Activated CD8-positive, alpha-beta T cell treated with anti-CD3 and anti-CD28 coated beads for 36 hours (primary cell): ENCODE measurements at regions of chr1 and their contacts with region 1.

Region 1: GRCh38 chr1:160607011-160607671 is 27.8 kb upstream of the CD84 start:
- DNase-seq: peak; percentile 76
- ATAC-seq: peak; percentile 95
- H3K4me3 Mint-ChIP-seq: no peak overlapping the region
- H3K27ac Mint-ChIP-seq: peak overlapping the region; percentile 89
- H3K4me1 Mint-ChIP-seq: peaks cover 55% of the 10 kb centered on the region
- H3K27me3 Mint-ChIP-seq: no peaks in the 10 kb centered on the region
- CTCF ChIP-seq: peak; percentile 93

Region 2: DNA sequence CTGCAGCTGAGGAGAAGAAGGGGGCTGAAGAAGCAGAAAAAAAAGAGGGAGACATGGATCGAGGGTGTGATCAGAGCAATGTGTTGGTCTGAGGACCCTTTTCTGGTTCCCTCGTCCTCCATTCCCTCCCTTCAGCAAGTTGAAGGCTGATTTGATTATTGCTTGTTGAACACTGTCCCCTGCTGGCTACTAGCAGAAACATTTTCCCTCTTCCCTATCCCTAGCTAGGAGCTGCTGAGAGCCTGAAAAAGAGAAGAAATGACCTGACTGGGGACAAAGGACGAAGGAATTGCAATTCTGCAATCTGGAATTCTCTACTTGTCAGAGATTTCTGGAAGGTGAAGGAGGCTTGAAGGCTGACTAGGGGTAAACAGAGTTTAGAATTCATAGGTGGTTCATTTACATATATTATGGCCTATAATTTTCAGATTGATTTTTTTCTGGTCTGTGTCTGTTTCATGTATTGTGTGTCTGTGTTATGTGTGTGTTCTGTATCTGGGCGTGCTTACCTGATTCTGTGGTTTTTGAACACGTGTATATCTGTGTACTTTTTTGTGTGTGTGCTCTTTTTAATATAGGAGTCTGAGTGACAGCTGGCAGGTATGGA is 230.5 kb before region 1 on chr1:
- CTCF ChIA-PET with region 1: interaction called, 14 read pairs
- POLR2A ChIA-PET with region 1: interaction called, 3 read pairs
- intact Hi-C with region 1: no loop called
- DNase-seq: peak; percentile 41
- ATAC-seq: peak; percentile 85
- H3K4me3 Mint-ChIP-seq: no peak overlapping the region
- H3K27ac Mint-ChIP-seq: no peak overlapping the region
- H3K4me1 Mint-ChIP-seq: peaks cover 11% of the 10 kb centered on the region
- H3K27me3 Mint-ChIP-seq: no peaks in the 10 kb centered on the region
- CTCF ChIP-seq: peak; percentile 95

Region 3: DNA sequence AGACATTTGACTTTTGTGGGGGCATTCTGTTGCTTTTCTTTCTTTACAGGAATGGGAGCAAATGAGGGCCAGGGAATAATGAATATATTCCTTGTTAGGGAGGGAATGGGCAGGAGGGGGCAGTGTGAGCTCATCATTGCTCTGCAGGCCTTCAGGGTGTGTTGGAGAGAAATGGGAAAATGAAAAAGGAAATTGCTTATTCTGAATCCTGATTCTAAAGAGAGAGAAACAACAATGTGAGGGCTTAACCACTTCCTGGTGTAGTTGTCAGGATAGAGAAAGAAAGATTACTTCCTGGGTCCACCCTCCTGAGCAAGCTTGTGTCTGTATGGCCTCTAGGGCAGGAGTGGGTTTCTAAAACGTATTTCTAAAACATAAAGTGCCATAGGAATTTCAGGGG is 178.5 kb before region 1 on chr1:
- CTCF ChIA-PET with region 1: interaction called, 74 read pairs
- POLR2A ChIA-PET with region 1: interaction called, 23 read pairs
- intact Hi-C with region 1: loop called (anchors 1 kb)
- DNase-seq: peak; percentile 42
- ATAC-seq: peak; percentile 53
- H3K4me3 Mint-ChIP-seq: peak overlapping the region; percentile 54
- H3K27ac Mint-ChIP-seq: peak overlapping the region; percentile 85
- H3K4me1 Mint-ChIP-seq: peaks cover 61% of the 10 kb centered on the region
- H3K27me3 Mint-ChIP-seq: no peaks in the 10 kb centered on the region
- CTCF ChIP-seq: peak; percentile 74

Region 4: DNA sequence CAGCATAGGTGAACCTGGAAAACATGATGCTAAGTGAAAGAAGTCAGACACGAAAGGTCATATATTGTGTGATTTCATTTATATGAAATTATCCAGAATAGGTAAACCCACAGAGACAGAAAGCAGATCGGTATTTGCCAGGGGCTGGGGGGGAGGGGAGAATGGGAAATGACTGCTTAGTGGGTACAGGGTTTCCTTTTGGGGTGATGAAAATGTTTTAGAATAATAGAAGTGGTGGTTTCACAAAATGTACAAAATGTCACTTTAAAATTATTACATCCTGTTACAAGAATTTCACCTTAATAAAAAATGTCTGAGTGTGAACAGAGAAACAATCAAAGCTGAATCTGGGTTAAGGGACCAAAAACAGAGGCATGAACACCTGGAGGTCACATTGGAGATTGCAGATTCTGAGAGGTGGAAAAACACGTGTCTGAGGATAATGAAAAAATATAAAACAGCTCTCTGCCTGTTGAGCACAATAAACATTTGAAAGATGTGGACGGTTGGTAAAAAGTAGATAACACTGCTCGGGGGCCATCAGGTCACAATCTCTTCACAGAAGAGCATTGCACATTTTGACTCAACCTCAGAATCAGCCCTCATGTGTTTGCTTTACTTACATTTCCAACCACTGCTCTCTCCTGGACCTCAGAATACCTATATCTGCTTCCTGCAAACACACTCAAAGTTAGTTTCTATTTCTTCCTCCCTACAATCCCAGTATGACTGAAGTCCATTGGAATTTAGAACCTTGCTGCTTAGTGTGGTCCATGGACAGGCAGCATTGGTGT is 87.3 kb before region 1 on chr1:
- CTCF ChIA-PET with region 1: interaction called, 25 read pairs
- POLR2A ChIA-PET with region 1: interaction called, 6 read pairs
- intact Hi-C with region 1: no loop called
- DNase-seq: peak; percentile 73
- ATAC-seq: peak; percentile 64
- H3K4me3 Mint-ChIP-seq: peak overlapping the region; percentile 90
- H3K27ac Mint-ChIP-seq: peak overlapping the region; percentile 97
- H3K4me1 Mint-ChIP-seq: peaks cover 75% of the 10 kb centered on the region
- H3K27me3 Mint-ChIP-seq: no peaks in the 10 kb centered on the region
- CTCF ChIP-seq: peak; percentile 39

Region 5: GRCh38 chr1:160539990-160540858 is 66.9 kb before region 1 on chr1:
- CTCF ChIA-PET with region 1: interaction called, 191 read pairs
- POLR2A ChIA-PET with region 1: interaction called, 3 read pairs
- intact Hi-C with region 1: loop called (anchors 2 kb)
- DNase-seq: peak; percentile 60
- ATAC-seq: peak; percentile 88
- H3K4me3 Mint-ChIP-seq: peak overlapping the region; percentile 35
- H3K27ac Mint-ChIP-seq: peak overlapping the region; percentile 94
- H3K4me1 Mint-ChIP-seq: peaks cover 67% of the 10 kb centered on the region
- H3K27me3 Mint-ChIP-seq: no peaks in the 10 kb centered on the region
- CTCF ChIP-seq: no peak

Region 6: GRCh38 chr1:160584784-160585183 is 22.4 kb before region 1 on chr1:
- CTCF ChIA-PET with region 1: interaction called, 16 read pairs
- POLR2A ChIA-PET with region 1: no interaction called
- intact Hi-C with region 1: no loop called
- DNase-seq: no peak
- ATAC-seq: no peak
- H3K4me3 Mint-ChIP-seq: no peak overlapping the region
- H3K27ac Mint-ChIP-seq: peak overlapping the region; percentile 70
- H3K4me1 Mint-ChIP-seq: peaks cover 50% of the 10 kb centered on the region
- H3K27me3 Mint-ChIP-seq: no peaks in the 10 kb centered on the region
- CTCF ChIP-seq: no peak

Region 7: GRCh38 chr1:160935527-160936258 is 328.6 kb after region 1 on chr1:
- CTCF ChIA-PET with region 1: no interaction called
- POLR2A ChIA-PET with region 1: no interaction called
- intact Hi-C with region 1: no loop called
- DNase-seq: no peak
- ATAC-seq: no peak
- H3K4me3 Mint-ChIP-seq: no peak overlapping the region
- H3K27ac Mint-ChIP-seq: no peak overlapping the region
- H3K4me1 Mint-ChIP-seq: no peaks in the 10 kb centered on the region
- H3K27me3 Mint-ChIP-seq: peaks cover 3% of the 10 kb centered on the region
- CTCF ChIP-seq: no peak